MCF 10A (cell line): ENCODE measurements at regions of chr6 and their contacts with region 1.

Region 1: DNA sequence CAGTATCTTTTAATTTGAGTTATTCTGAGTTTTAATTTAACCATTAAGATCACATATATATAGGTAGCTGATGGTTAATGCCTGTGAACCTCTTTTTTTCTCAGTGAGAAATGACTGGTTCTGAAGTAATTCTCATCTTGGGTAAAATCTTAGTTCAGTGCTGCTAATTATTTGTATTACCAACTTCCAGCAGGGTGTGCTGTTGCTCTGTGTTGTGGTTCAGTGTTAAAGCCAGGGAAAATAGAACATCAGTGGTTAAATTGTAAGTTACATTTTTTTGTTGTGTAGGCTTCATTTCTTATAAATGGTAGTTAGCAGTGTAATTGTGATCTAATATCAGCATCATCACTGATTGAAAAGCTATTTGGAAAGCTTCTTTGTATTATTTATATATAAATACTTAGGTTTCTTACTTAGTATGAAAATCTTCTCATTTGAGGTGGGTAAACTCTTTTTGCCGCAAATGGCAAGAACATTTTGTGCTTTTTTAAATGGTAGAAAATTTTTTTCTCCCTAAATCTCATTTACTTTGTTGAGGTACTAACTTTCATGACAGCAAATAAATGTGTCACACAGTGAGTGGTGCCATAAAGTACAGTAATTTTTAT is 43.7 kb downstream of the CDC5L start:
- DNase-seq: peak; percentile 75
- H3K4me3 Mint-ChIP-seq: no peak overlapping the region
- H3K27ac Mint-ChIP-seq: no peak overlapping the region
- H3K4me1 Mint-ChIP-seq: no peaks in the 10 kb centered on the region
- H3K27me3 Mint-ChIP-seq: no peaks in the 10 kb centered on the region
- CTCF ChIP-seq: peak; percentile 60

Region 2: GRCh38 chr6:44332585-44332984 is 98.6 kb before region 1 on chr6:
- CTCF ChIA-PET with region 1: no interaction called
- POLR2A ChIA-PET with region 1: no interaction called
- intact Hi-C with region 1: no loop called
- DNase-seq: no peak
- H3K4me3 Mint-ChIP-seq: no peak overlapping the region
- H3K27ac Mint-ChIP-seq: no peak overlapping the region
- H3K4me1 Mint-ChIP-seq: no peaks in the 10 kb centered on the region
- H3K27me3 Mint-ChIP-seq: peaks cover 31% of the 10 kb centered on the region
- CTCF ChIP-seq: no peak

Region 3: DNA sequence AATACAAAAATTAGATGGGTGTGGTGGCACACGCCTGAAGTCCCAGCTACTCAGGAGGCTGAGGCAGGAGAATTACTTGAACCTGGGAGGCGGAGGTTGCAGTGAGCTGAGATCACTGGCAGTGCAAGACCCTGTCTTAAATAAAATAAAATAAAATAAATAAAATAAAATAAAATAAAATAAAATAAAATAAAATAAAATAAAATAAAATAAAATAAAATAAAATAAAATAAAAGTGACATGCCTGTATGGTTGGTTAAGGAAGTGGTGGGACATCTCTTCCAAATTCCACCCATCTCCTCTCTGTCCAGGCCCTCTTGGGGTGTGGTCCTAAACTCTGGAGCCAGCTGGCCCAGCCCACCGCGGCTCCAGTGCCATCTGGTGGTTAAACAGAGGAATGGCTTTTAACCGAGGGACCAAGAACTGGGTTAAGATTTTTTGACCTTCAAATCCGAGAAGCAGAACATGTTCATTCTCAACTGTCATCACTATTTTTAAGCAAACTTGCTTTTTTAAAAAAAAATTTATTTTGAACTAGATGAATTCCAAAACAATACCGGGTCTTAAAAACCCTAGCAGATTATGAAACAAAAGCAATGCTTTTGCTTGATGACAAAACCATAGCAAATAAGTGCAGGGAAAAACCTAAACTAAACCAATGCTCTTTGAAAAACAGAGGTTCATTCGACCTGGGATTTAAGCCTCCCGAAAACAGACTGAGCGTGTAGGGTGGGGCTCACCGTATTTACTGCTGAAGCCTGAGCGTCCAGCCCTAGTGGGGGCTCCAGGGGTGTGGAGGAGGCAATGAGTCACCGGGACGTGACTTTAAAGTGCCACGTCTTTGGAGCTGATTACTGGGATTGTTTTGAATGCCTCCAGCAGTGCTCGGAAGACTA is 25.1 kb after region 1 on chr6:
- CTCF ChIA-PET with region 1: interaction called, 41 read pairs
- POLR2A ChIA-PET with region 1: interaction called, 3 read pairs
- intact Hi-C with region 1: loop called (anchors 1 kb)
- DNase-seq: peak; percentile 76
- H3K4me3 Mint-ChIP-seq: no peak overlapping the region
- H3K27ac Mint-ChIP-seq: no peak overlapping the region
- H3K4me1 Mint-ChIP-seq: peaks cover 20% of the 10 kb centered on the region
- H3K27me3 Mint-ChIP-seq: no peaks in the 10 kb centered on the region
- CTCF ChIP-seq: peak; percentile 88

Region 4: DNA sequence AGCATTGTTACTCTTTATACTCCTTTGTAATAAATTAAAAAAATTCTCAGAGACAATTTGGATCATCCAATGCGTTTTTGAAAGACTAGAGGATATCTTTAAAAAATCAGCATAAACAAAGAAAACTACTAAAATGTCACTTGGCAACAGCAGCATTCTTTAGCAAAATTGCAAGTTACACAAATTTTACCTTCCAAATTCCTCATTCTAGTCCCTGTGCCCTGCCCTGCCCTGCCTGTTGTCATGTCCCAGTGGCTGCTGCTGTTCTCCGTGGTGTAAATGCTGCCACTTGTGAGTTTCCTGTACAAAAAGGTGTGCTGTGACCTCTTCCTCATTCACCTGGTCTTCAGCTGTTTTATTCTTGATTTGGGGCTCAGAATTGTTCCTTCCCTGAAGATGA is 39.5 kb after region 1 on chr6:
- CTCF ChIA-PET with region 1: interaction called, 10 read pairs
- POLR2A ChIA-PET with region 1: no interaction called
- intact Hi-C with region 1: loop called (anchors 1 kb)
- DNase-seq: no peak
- H3K4me3 Mint-ChIP-seq: no peak overlapping the region
- H3K27ac Mint-ChIP-seq: no peak overlapping the region
- H3K4me1 Mint-ChIP-seq: no peaks in the 10 kb centered on the region
- H3K27me3 Mint-ChIP-seq: no peaks in the 10 kb centered on the region
- CTCF ChIP-seq: no peak